ENCODE measurements at regions of chr11 and their contacts with region 1.

Region 1: DNA sequence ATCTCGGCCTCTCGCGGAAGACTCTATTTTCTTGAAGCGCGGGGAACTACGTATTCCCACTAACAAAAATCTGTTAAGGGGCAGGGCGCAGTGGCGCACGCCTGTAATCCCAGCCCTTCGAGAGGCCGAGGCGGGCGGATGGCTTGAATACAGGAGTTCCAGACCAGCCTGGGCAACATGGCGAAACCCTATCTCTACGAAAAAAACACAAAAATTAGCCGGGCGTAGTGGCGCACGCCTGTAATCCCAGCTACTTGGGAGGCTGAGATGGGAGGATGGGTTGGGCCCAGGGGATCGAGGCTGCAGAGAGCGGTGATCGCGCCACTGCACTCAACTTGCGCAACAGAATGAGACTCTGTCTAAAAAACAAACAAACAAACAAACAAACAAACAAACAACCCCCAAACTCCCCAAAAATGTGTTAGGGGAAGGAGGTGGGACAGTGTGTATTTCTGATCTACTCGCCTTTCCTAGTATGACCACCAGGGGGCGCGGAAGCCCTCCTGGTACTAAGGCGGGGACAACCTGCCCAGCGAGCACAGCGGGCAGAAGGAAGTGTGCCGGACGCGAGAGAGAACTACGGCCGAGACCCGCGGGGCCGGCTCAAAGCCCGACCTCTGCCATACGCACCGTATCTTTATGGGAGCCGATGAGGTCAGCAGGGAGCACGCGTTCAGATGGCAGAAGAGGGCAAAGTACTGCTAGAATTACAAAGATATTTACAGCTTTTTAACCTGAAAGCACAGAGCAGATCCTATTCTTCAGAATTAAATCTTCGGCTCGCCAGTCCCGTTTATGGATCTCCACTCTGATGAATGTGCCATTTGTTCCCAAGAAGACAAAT is 1.3 kb upstream of the STX3 start:
- DNase-seq: peak; percentile 87

Region 2: DNA sequence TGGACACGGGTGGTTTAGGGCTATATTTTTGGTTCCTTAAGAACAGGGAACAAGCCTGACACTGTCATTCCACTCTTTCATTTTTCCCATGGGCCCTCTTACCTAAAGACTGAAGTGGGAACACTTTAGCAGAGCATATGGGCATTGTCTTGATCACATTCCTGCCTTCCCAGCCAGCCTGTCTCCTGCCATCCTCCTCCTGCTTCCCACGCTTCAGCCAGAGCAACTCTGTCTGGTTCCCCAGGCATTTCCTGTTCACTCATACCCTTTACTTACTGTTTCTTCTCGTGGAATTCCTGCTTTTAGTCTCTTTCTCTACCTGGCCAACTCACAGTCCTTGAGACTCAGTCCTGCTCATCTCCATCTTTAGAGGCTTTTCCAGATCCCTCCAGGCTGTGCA is 33.9 kb after region 1 on chr11:
- CTCF ChIA-PET with region 1: no interaction called
- POLR2A ChIA-PET with region 1: interaction called, 11 read pairs
- DNase-seq: no peak

Region 3: GRCh38 chr11:59802639-59803176 is 48.8 kb after region 1 on chr11:
- CTCF ChIA-PET with region 1: interaction called, 19 read pairs
- POLR2A ChIA-PET with region 1: interaction called, 11 read pairs
- DNase-seq: peak; percentile 33

Region 4: DNA sequence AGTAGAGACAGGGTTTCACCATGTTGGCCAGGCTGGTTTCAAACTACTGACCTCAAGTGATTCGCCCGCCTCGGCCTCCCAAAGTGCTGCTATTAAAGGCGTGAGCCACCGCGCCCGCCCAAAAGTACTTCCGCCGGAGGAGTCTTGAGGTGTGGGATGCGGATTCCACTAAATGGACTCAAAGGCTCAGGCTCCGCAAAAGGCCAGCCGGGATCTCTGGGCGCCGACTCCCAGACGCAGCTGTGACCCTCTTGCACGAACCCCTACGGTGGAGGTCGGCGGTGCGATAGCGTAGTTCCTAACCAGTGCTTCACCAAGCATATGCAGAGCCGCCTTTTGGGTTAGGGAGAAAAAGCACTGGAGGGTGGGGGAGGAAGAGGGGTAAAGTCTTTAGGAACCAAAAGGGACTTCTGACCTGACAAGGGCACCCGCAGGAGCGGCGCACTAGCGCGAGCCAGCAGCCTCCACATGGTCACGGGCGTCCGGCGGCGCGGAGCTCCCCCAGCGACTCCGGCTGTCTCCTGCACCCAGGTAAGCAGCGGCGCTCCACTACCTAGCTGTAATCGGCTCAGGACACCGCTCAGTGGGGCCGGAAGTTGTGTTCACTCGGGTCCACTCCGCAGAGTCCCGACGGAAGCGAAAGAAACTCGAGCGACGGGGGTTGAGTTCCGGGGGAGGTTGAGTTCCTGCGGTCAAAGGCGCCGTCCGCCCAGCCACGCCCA is 56.5 kb after region 1 on chr11 and contains the start of gene MRPL16:
- CTCF ChIA-PET with region 1: no interaction called
- POLR2A ChIA-PET with region 1: interaction called, 22 read pairs
- DNase-seq: peak; percentile 86

Measured in HEK293T (cell line).